GM18951 (cell line): ENCODE measurements at regions of chr9 and their contacts with region 1.

Region 1: GRCh38 chr9:101516655-101517054 is 17.0 kb upstream of the RNF20 start:
- POLR2A ChIP-seq: no peak

Region 2: GRCh38 chr9:101449140-101449721 is 67.4 kb before region 1 on chr9:
- in situ Hi-C with region 1: loop called (anchors 5 kb)
- POLR2A ChIP-seq: no peak